Activated CD4-positive, alpha-beta T cell treated with anti-CD3 and anti-CD28 coated beads for 36 hours (primary cell): ENCODE measurements at regions of chr10 and their contacts with region 1.

Region 1: GRCh38 chr10:34655286-34656170 is 159.6 kb downstream of the PARD3 start:
- DNase-seq: peak; percentile 51
- ATAC-seq: peak; percentile 39
- H3K4me3 Mint-ChIP-seq: no peak overlapping the region
- H3K27ac Mint-ChIP-seq: no peak overlapping the region
- H3K4me1 Mint-ChIP-seq: no peaks in the 10 kb centered on the region
- H3K27me3 Mint-ChIP-seq: peaks cover 8% of the 10 kb centered on the region

Region 2: GRCh38 chr10:34890939-34891338 is 235.4 kb after region 1 on chr10:
- CTCF ChIA-PET with region 1: no interaction called
- POLR2A ChIA-PET with region 1: no interaction called
- intact Hi-C with region 1: loop called in 1 of 2 experiments (anchors 10 kb)
- DNase-seq: no peak
- ATAC-seq: no peak
- H3K4me3 Mint-ChIP-seq: no peak overlapping the region
- H3K27ac Mint-ChIP-seq: no peak overlapping the region
- H3K4me1 Mint-ChIP-seq: no peaks in the 10 kb centered on the region
- H3K27me3 Mint-ChIP-seq: peaks cover 2% of the 10 kb centered on the region